Right ventricle myocardium superior (tissue), 1 donor: ENCODE measurements at regions of chr5 and their contacts with region 1.

Region 1: DNA sequence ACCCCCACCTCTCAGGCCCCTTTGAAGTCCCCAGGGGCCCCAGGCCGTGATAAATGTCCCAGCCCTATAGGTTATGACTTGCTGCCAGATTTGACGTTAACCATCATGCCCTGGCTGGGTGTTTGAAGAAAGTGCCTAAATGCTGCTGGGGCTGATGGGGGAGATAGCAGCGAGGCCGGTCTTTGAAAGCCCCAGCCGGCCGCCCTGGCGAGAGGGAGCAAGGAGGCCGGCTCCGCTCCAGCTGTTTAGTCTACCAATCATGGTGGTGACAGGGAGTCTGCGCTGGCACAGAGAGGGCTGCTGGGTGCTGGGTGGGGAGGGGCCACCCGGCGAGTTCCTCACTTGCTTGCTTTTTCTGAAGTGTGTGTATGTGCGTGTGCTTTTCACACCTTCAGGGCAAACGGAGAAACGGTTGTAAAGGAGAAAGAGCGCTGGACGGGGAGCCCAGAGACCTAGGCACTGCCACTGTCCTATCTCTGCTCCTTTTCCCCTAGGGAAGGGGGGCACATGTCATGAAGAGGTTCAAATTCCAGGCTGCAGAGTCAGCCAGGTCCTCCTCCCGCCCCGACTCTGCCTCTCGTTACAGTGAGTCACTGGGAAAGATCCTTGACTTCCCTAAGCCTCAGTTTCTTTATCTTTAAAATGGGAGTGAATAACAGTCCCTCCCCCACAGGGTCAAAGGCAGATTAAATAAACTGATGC is 126.1 kb upstream of the HAND1 start:
- DNase-seq: peak; percentile 56
- ATAC-seq: peak; percentile 68

Region 2: DNA sequence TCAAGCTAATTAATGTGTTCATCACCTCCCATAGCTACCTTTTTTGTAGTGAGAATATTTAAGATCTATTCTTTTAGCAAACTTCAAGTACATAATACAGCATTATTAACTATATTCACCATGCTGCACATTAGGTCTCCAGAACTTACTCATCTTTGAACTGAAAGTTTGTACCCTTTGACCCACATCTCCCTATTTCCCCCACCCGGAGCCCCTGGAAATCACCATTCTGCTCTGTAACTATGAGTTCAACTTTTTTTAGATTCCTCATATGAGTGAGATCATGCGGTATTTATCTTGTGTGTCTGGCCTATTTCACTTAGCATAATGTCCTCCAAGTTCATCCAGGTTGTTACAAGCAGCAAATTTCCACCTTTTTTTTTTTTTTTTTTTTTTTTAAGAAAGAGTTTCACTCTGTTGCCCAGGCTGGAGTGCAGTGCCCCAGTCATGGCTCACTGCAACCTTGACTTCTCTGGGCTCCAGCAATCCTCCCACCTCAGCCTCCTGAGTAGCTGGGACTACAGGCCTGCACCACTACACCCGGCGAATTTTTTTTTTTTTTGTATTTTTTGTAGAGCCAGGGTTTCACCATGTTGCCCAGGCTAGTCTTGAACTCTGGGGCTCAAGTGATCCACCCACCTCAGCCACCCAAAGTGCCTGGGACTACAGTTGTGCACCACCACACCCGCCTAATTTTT is 258.7 kb before region 1 on chr5:
- intact Hi-C with region 1: no loop called
- DNase-seq: no peak
- ATAC-seq: no peak

Region 3: DNA sequence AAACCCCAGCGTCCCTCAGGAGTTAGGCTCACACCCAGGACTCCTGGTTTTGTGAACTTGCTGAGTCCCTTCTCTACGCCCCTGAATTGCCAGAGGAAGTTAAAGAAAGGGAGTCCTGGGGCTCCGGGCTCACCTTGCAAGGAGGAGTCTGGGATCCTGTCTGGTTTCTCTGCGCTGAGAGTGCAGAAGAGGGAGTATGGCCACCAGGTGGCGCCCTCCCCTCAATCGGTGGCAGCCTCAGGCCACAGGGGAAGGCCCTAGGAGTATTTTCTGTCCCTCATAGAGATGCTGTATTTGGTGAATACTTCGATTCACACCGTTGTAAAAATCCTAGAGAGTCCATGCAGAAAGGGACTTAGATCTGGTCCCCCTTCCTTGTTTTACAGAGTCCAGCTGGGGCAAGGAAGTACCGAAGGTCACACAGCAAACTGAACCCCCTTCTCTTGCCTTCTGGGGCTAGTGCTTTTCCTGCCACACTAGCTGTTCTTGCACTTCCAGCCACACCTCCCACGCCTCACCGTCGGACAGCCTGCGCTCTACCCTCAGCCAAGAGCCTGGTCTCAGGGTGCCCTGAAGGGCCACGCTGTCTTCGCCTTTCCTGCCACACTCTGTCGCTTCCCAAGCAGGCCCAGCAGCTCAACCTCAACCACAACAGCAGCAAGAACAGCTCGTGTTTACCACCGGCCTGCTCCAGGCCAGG is 136.3 kb before region 1 on chr5:
- intact Hi-C with region 1: loop called (anchors 2 kb)
- DNase-seq: peak; percentile 88
- ATAC-seq: peak; percentile 91

Region 4: GRCh38 chr5:154493274-154493673 is 110.9 kb before region 1 on chr5:
- intact Hi-C with region 1: no loop called
- DNase-seq: no peak
- ATAC-seq: no peak

Region 5: DNA sequence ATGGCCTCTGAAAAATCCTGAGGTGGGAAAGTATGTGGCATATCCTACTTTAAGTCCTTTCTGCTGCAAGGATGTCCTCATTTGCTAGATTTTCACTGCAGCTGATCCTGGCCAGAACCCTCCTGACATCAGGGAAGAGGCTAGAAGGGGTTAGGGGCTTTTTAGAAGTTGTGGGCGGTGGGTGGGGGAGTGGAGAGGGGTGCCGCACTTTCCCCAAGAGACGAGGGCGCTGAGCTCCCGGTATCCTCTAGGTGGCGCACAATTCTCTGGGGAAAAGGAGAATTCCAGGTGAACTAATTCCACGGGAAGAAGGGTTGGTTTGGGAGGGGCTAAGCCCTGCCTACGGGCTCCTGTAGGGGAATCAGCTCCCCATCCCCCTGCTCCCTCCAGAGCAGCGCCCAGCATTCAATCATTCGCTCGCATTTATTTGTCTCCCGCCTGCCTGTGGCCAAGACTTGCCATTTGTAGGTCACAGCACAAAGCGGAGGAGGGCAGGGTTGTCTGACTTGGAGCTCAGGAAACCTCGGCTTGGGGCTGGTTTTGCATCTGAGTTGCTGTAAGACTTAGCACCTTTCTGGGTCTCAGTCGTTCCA is 83.2 kb before region 1 on chr5:
- intact Hi-C with region 1: loop called (anchors 10 kb)
- DNase-seq: no peak
- ATAC-seq: peak; percentile 29